ENCODE measurements at regions of chr12 and their contacts with region 1.

Region 1: GRCh38 chr12:112439769-112440168 is 21.0 kb downstream of the PTPN11 start:
- H3K4me3 ChIP-seq: no peak overlapping the region
- H3K27ac ChIP-seq: no peak overlapping the region
- H3K4me1 ChIP-seq: no peaks in the 10 kb centered on the region
- CTCF ChIP-seq: no peak

Region 2: DNA sequence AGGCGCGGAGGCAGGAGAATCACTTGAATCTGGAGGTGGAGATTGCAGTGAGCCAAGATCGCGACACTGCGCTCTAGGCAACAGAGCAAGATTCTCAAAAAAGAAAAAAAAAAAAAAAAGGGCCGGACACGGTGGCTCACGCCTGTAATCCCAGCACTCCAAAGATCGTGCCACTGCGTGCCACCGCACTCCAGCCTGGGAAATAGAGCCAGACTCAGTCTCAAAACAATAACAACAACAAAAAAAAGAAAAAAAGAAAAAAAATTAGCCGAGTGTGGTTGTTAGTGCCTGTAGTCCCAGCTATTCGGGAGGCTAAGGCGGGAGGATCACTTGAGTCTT is 29.9 kb before region 1 on chr12:
- CTCF ChIA-PET with region 1: interaction called, 10 read pairs
- POLR2A ChIA-PET with region 1: no interaction called
- H3K4me3 ChIP-seq: no peak overlapping the region
- H3K27ac ChIP-seq: no peak overlapping the region
- H3K4me1 ChIP-seq: no peaks in the 10 kb centered on the region
- CTCF ChIP-seq: no peak

Measured in HEK293 (cell line).